Sigmoid colon (tissue), 7 donors: ENCODE measurements at regions of chr15 and their contacts with region 1.

Region 1: GRCh38 chr15:87939848-87940457 is 316.6 kb downstream of the NTRK3 start:
- DNase-seq: no peak
- H3K4me3 ChIP-seq: no peak overlapping the region
- H3K27ac ChIP-seq: no peak overlapping the region
- H3K4me1 ChIP-seq: peaks cover 0 to 11% (median 4%) of the 10 kb centered on the region in 4 donors
- H3K27me3 ChIP-seq: no peaks in the 10 kb centered on the region
- CTCF ChIP-seq: no peak
- EP300 ChIP-seq: no peak
- POLR2A ChIP-seq: no peak

Region 2: DNA sequence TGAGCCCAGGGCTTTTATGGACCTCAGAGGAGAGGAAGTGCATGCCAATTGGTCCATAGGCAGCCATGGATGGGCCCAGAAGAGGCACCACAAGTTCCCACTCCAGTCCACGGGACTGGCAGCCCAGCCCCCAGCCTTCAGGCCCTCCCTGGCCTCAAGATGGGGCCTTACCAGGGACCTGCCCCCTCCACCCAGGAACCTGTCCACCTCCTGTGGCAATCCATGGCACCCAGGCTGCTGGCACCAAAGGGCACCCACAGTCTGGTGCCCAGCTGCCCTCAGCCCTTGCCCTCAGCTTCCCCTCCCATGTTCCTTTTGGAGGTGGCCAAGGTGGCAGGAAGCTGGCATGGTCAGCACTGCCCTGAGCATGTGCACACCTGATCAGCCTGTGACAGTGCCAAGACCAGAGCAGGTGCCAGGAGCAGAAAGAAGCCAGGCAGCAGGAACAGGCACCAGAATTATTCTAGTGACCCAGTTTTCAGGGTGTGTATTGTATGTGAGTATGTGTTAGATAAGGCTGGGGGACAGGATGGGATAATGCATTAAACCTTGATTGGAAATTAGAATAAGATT is 98.4 kb before region 1 on chr15:
- intact Hi-C with region 1: no loop called
- DNase-seq: no peak
- H3K4me3 ChIP-seq: no peak overlapping the region
- H3K27ac ChIP-seq: no peak overlapping the region
- H3K4me1 ChIP-seq: no peaks in the 10 kb centered on the region
- H3K27me3 ChIP-seq: no peaks in the 10 kb centered on the region
- CTCF ChIP-seq: no peak
- EP300 ChIP-seq: no peak
- POLR2A ChIP-seq: no peak

Region 3: DNA sequence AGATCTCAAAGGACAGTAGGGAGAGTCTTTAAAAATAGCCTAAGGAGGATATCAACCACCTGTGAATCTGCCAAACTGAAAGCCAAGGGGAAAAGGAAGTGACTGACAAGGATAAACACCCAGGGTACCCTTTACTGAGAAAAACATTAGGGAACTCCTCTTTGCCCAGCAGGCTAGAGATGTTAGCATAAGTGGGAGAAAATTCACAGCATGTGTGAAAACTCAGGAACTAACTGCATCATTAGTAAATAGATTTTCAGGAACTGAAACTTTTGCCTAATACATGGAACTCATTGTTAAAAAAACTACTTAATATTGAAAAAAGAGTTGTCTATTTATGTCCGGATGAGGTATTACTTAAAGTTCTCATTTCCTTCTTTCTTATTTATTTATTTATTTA is 58.9 kb before region 1 on chr15:
- intact Hi-C with region 1: loop called (anchors 10 kb)
- DNase-seq: no peak
- H3K4me3 ChIP-seq: no peak overlapping the region
- H3K27ac ChIP-seq: no peak overlapping the region
- H3K4me1 ChIP-seq: no peaks in the 10 kb centered on the region
- H3K27me3 ChIP-seq: no peaks in the 10 kb centered on the region
- CTCF ChIP-seq: no peak
- EP300 ChIP-seq: no peak
- POLR2A ChIP-seq: no peak